ENCODE measurements at regions of chr1 and their contacts with region 1.

Region 1: DNA sequence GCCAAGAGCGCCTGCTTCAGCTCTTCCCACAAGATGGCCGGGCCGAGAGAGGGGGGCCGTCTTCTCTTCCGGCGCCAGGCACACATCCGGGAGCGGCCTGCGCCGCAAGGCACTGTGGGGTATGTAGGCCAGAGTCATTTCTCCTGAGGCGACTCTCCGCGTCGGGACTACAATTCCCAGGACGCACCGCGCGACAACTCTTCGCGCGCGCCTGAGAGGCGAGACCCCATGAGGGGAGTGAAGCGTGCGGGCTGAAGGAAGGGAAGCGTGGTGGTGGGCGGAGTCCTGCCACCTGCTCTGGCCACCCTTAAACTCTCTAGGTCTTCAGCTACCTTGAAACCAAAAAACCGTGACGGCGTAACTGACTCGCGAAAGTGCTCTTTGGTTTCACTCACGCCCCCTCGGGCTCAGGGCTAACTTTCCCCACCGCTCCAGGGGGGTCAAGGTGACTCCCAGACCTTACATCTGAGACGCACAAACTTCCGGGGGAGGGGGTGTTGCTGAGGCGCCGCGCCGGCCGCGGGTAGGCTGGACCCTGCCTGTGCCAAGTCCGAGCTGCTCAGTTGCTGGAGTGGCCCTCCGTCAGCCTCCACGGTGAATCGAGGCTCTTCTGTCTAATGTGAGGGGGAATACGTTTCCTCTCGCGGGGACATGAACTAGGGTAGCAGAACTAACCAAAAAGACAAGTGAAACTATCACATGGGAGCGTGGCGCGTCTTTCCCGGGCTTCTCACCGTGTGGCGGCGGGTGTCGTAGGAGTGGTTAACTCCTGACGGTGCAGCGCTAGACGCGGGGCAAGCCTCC is at the start of gene SERBP1:
- DNase-seq: peak; percentile 95
- H3K4me3 Mint-ChIP-seq: peak within 1 kb of the TSS; percentile 90
- H3K27ac Mint-ChIP-seq: peak within 1 kb of the TSS; percentile 97
- H3K4me1 Mint-ChIP-seq: peaks cover 62% of the 10 kb centered on the region
- H3K27me3 Mint-ChIP-seq: no peaks in the 10 kb centered on the region
- total RNA-seq, gene SERBP1: 585 and 603 TPM in 2 replicates

Region 2: GRCh38 chr1:66924756-66925557 is 505.6 kb before region 1 on chr1 and contains the starts of genes DNAI4 and MIER1:
- intact Hi-C with region 1: loop called (anchors 1 kb)
- DNase-seq: peak; percentile 98
- H3K4me3 Mint-ChIP-seq: peak within 1 kb of the TSS; percentile 93
- H3K27ac Mint-ChIP-seq: peak within 1 kb of the TSS; percentile 97
- H3K4me1 Mint-ChIP-seq: peaks cover 66% of the 10 kb centered on the region
- H3K27me3 Mint-ChIP-seq: no peaks in the 10 kb centered on the region
- total RNA-seq, gene DNAI4: 1.2 and 3.2 TPM in 2 replicates
- total RNA-seq, gene MIER1: 53.2 and 57.4 TPM in 2 replicates

Region 3: GRCh38 chr1:67053785-67054772 is 376.5 kb before region 1 on chr1 and contains the start of gene SLC35D1:
- intact Hi-C with region 1: loop called (anchors 2 kb)
- DNase-seq: peak; percentile 75
- H3K4me3 Mint-ChIP-seq: peak within 1 kb of the TSS; percentile 93
- H3K27ac Mint-ChIP-seq: peak within 1 kb of the TSS; percentile 94
- H3K4me1 Mint-ChIP-seq: peaks cover 49% of the 10 kb centered on the region
- H3K27me3 Mint-ChIP-seq: peaks cover 6% of the 10 kb centered on the region
- total RNA-seq, gene SLC35D1: 20.4 and 20.5 TPM in 2 replicates

Region 4: GRCh38 chr1:67300561-67300960 is 130.0 kb before region 1 on chr1:
- intact Hi-C with region 1: loop called (anchors 1 kb)
- DNase-seq: no peak
- H3K4me3 Mint-ChIP-seq: peak overlapping the region; percentile 35
- H3K27ac Mint-ChIP-seq: peak overlapping the region; percentile 63
- H3K4me1 Mint-ChIP-seq: peaks cover 88% of the 10 kb centered on the region
- H3K27me3 Mint-ChIP-seq: no peaks in the 10 kb centered on the region

Region 5: DNA sequence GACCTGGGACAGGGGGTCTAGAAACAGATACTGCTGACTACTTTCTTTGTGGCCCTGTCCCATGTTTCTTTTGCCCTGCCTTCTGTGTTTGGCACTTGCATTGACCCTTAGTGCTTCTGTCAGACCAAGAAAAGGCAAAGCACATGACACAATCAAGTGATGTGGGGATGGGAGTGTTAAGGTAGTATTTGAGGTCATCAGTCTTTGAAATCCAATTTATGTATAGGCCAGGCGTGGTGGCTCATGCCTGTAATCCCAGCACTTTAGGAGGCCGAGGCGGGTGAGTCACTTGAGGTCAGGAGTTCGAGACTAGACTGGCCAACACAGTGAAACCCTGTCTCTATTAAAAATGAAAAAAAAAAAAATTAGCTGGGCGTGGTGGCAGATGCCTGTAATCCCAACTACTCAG is 26.3 kb before region 1 on chr1:
- intact Hi-C with region 1: loop called (anchors 1 kb)
- DNase-seq: no peak
- H3K4me3 Mint-ChIP-seq: no peak overlapping the region
- H3K27ac Mint-ChIP-seq: no peak overlapping the region
- H3K4me1 Mint-ChIP-seq: peaks cover 24% of the 10 kb centered on the region
- H3K27me3 Mint-ChIP-seq: no peaks in the 10 kb centered on the region

Measured in activated T-helper 1 cell treated with anti-CD3 and anti-CD28 coated beads, Interleukin-12 subunit alpha, Interleukin-12 subunit beta, Interleukin-2, Interleukin-4 antibody, amounts not matched to agents 30 ng/mL and 10 ng/mL and 1 ng/mL, durations not matched to agents 14 hours and 24 hours and 36 hours (primary cell).